CD8-positive, alpha-beta memory T cell (primary cell): ENCODE measurements at regions of chr14 and their contacts with region 1.

Region 1: DNA sequence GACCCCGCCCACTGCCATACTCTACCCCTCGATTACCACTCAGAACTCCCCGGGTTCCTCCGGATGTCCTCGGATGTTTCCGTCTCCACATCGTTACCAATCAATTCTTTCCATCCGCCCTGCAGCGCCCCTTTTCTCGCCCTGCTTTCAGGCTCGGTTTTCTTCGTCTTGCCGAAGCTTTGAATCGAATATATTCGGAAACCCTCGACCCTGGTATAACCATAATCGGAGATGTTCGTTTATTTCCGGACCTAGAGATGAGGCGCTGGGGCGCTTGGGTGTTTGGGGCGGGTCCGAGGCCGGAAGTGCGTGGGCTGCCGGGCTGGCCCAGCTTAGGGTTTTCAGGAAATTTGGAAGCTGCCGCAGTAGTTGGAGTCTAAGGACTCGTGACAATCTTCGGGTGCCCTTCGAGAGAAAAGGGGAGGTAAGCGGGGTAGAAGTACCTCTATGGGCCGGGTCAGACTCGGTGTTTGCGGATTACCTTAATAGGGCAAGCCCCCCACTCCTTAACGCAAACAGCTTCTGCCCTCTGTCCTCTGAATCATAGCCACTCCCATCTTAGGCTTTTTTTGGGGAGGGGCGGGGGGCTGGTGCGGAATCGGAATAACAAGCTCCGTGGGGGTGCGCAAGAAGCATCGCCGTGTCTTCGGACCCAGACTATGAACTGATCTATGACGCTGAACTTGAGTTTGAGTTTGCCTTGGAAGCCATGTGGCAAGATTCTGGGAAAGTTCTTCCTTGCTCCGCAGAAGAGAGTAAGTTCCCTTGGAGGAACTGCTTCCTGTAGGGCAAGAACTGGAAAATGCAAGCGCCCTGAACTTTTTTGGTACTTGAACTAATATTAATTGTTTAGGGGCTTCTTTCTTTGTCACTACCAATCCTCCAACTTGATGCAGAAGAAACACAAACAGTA is at the start of gene C14orf119:
- DNase-seq: peak; percentile 99 to 100 (median 100)
- H3K4me3 ChIP-seq: peak within 1 kb of the TSS; percentile 97
- H3K4me3 Mint-ChIP-seq: no peak within 1 kb of the TSS
- H3K27ac ChIP-seq: peak within 1 kb of the TSS; percentile 97
- H3K27ac Mint-ChIP-seq: no peak within 1 kb of the TSS
- H3K4me1 ChIP-seq: peaks cover 38% of the 10 kb centered on the region
- H3K4me1 Mint-ChIP-seq: peaks cover 13 to 41% (median 36%) of the 10 kb centered on the region in 3 donors
- H3K27me3 ChIP-seq: no peaks in the 10 kb centered on the region
- H3K27me3 Mint-ChIP-seq: no peaks in the 10 kb centered on the region
- total RNA-seq, gene C14orf119: 52.5 to 55.6 TPM

Region 2: GRCh38 chr14:21229821-21230220 is 1865.6 kb before region 1 on chr14:
- CTCF ChIA-PET with region 1: no interaction called
- POLR2A ChIA-PET with region 1: interaction called, 10 read pairs
- DNase-seq: peak in 2 of 5 donors; percentile 58 to 67
- H3K4me3 ChIP-seq: no peak overlapping the region
- H3K4me3 Mint-ChIP-seq: peak overlapping the region; percentile 60 to 87 (median 76)
- H3K27ac ChIP-seq: peak overlapping the region; percentile 29
- H3K27ac Mint-ChIP-seq: peak overlapping the region; percentile 85 to 97 (median 91)
- H3K4me1 ChIP-seq: peaks cover 70% of the 10 kb centered on the region
- H3K4me1 Mint-ChIP-seq: peaks cover 67 to 84% (median 78%) of the 10 kb centered on the region in 3 donors
- H3K27me3 ChIP-seq: no peaks in the 10 kb centered on the region
- H3K27me3 Mint-ChIP-seq: no peaks in the 10 kb centered on the region

Region 3: GRCh38 chr14:23006544-23007419 is 88.7 kb before region 1 on chr14:
- CTCF ChIA-PET with region 1: no interaction called
- POLR2A ChIA-PET with region 1: interaction called, 18 read pairs
- DNase-seq: peak; percentile 95 to 99 (median 98)
- H3K4me3 ChIP-seq: peak overlapping the region; percentile 68
- H3K4me3 Mint-ChIP-seq: peak overlapping the region; percentile 90 to 98 (median 97)
- H3K27ac ChIP-seq: peak overlapping the region; percentile 88
- H3K27ac Mint-ChIP-seq: peak overlapping the region; percentile 84 to 99 (median 98)
- H3K4me1 ChIP-seq: peaks cover 36% of the 10 kb centered on the region
- H3K4me1 Mint-ChIP-seq: peaks cover 40 to 56% (median 55%) of the 10 kb centered on the region in 3 donors
- H3K27me3 ChIP-seq: no peaks in the 10 kb centered on the region
- H3K27me3 Mint-ChIP-seq: no peaks in the 10 kb centered on the region

Region 4: GRCh38 chr14:23076785-23077408 is 18.6 kb before region 1 on chr14:
- CTCF ChIA-PET with region 1: interaction called, 35 read pairs
- POLR2A ChIA-PET with region 1: interaction called, 9 read pairs
- DNase-seq: peak in 2 of 5 donors; percentile 19 to 50
- H3K4me3 ChIP-seq: no peak overlapping the region
- H3K4me3 Mint-ChIP-seq: no peak overlapping the region
- H3K27ac ChIP-seq: no peak overlapping the region
- H3K27ac Mint-ChIP-seq: peak overlapping the region in 3 of 8 donors; percentile 7 to 29 (median 20)
- H3K4me1 ChIP-seq: peaks cover 9% of the 10 kb centered on the region
- H3K4me1 Mint-ChIP-seq: peaks cover 7 to 18% (median 13%) of the 10 kb centered on the region in 3 donors
- H3K27me3 ChIP-seq: no peaks in the 10 kb centered on the region
- H3K27me3 Mint-ChIP-seq: no peaks in the 10 kb centered on the region

Region 5: DNA sequence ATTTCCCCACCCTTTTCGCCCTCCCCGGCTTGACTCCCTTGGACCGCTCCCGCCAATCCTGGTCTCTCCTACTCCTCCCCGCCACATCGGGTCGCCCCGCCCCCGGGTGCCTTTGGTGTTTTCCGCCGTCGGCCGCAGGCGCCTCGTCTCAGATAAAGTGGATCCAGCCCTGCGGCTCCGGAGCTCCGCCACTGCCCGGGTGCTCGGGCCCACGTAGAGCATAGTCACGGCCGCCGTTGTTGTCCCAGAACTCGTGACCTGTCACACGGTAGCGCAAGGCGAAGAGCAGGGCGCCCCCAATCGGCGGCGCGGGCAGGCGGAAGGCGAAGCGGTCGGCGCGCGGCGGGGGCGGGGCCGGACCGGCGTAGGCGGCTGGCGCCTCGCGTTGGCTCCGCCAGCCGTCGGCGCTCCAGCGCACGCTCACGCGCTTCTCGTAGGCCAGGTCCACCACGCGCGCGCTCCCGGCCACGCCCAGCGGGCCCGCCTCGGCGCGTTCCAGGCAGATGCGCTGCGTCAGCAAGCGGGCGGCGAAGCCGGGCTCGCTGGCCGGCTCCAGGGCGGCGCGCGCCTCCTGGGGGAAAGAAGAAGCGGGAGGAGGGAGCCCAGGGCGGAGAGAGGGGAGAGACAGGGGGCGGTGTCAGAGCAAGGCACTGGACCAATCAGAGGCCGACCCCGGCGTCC is 206.0 kb after region 1 on chr14:
- CTCF ChIA-PET with region 1: interaction called, 6 read pairs
- POLR2A ChIA-PET with region 1: interaction called, 18 read pairs
- DNase-seq: peak; percentile 93 to 99 (median 97)
- H3K4me3 ChIP-seq: peak overlapping the region; percentile 96
- H3K4me3 Mint-ChIP-seq: peak overlapping the region; percentile 86 to 98 (median 95)
- H3K27ac ChIP-seq: peak overlapping the region; percentile 96
- H3K27ac Mint-ChIP-seq: peak overlapping the region; percentile 91 to 99 (median 96)
- H3K4me1 ChIP-seq: peaks cover 21% of the 10 kb centered on the region
- H3K4me1 Mint-ChIP-seq: peaks cover 17 to 30% (median 28%) of the 10 kb centered on the region in 3 donors
- H3K27me3 ChIP-seq: peaks cover 3% of the 10 kb centered on the region
- H3K27me3 Mint-ChIP-seq: peaks cover 10 to 12% of the 10 kb centered on the region in 2 donors